ENCODE measurements at regions of chr14 and their contacts with region 1.

Region 1: DNA sequence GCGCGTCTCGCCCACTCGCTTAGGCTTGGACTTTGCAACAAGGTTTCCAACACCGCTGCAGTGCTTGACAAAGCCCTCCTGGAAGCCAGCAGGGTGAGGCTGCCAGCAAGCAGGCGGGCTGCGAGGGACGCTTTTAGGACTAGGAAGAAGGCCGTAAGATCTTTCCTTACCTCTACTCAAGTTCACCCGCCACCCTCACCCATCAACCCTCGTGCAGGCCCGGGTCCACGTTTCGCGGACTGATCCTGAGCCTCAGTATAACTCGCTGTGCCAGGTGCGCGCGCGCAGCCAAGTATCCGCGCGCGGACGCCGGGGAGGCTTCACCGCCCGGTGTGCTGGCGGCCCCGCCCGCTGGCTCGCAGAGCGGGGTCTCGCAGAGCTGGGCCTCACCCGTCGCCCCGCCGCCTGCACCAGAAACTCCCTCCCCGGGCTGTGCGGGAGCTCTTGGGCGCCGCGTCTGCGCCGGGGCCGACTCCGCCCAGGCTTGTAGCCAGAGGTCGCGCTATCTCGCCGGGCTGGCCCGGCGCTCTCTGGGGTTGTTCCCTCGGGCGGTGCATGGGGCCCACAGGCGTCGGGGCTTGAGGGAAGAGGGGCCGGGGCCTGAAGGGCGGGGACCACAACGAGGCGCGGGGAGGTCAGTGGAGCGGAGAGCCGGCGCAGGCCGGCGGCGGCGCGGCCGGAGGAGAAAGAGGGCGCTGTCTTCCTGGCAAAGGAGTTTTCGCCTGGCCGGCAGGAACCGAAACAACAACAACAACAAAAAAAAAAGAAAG is 7.6 kb upstream of the SIX1 start:
- DNase-seq: peak; percentile 24
- H3K4me3 Mint-ChIP-seq: peak overlapping the region; percentile 82
- H3K27ac Mint-ChIP-seq: no peak overlapping the region
- H3K4me1 Mint-ChIP-seq: peaks cover 48% of the 10 kb centered on the region
- H3K27me3 Mint-ChIP-seq: peaks cover 79% of the 10 kb centered on the region

Region 2: GRCh38 chr14:60642270-60643140 is 14.4 kb before region 1 on chr14:
- intact Hi-C with region 1: loop called (anchors 1 kb)
- DNase-seq: no peak
- H3K4me3 Mint-ChIP-seq: no peak overlapping the region
- H3K27ac Mint-ChIP-seq: no peak overlapping the region
- H3K4me1 Mint-ChIP-seq: peaks cover 14% of the 10 kb centered on the region
- H3K27me3 Mint-ChIP-seq: peaks cover 88% of the 10 kb centered on the region

Region 3: GRCh38 chr14:60724137-60724619 is 67.3 kb after region 1 on chr14 and contains the start of gene SIX4:
- intact Hi-C with region 1: loop called (anchors 2 kb)
- DNase-seq: no peak
- H3K4me3 Mint-ChIP-seq: peak within 1 kb of the TSS; percentile 91
- H3K27ac Mint-ChIP-seq: peak within 1 kb of the TSS; percentile 67
- H3K4me1 Mint-ChIP-seq: peaks cover 25% of the 10 kb centered on the region
- H3K27me3 Mint-ChIP-seq: peaks cover 75% of the 10 kb centered on the region
- total RNA-seq, gene SIX4: 0.57 and 1.1 TPM in 2 replicates

Region 4: GRCh38 chr14:60926002-60926401 is 269.1 kb after region 1 on chr14:
- intact Hi-C with region 1: no loop called
- DNase-seq: no peak
- H3K4me3 Mint-ChIP-seq: no peak overlapping the region
- H3K27ac Mint-ChIP-seq: no peak overlapping the region
- H3K4me1 Mint-ChIP-seq: peaks cover 7% of the 10 kb centered on the region
- H3K27me3 Mint-ChIP-seq: no peaks in the 10 kb centered on the region

Region 5: DNA sequence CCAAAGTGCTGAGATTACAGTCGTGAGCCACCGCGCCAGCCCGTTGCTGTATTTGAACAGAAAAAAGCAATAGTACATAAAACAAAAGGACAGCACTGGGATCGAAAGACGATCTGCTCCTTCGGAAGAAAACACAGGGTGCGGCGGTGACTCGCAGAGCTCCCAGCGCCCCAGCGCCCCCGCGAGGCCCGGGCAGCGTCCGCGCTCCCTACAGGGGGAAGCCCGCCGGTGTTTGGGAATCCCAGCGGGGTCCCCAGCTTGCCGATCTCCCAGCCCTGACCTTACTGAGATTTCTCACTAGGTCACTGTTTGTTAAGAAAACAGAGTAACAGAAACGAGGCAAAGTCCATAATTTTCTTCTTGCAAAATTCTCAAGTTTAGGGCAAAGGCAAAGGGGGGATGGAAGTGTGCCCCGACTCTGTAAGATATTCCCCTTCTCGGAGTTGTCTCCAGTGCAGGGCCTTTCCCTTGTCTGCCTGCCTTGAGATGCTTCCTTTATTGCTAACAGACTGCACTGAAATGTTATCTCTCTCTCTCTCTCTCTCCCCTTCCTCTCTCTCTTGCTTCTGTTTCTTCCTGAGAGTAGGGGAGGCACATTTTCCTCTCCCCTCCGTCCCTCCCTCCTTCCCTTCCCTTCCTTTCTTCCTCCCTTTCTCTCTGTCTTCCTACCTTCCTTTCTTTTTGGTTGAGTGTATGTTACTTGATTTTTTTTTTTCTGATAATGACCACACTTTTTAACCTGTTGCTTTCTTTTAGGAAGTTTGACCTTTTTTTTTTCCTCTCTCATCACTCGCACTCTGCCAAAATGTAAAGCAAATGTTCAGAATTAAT is 532.3 kb after region 1 on chr14:
- intact Hi-C with region 1: loop called (anchors 10 kb)
- DNase-seq: no peak
- H3K4me3 Mint-ChIP-seq: peak overlapping the region; percentile 70
- H3K27ac Mint-ChIP-seq: peak overlapping the region; percentile 15
- H3K4me1 Mint-ChIP-seq: peaks cover 26% of the 10 kb centered on the region
- H3K27me3 Mint-ChIP-seq: peaks cover 23% of the 10 kb centered on the region